ENCODE measurements at regions of chr4 and their contacts with region 1.

Region 1: GRCh38 chr4:173334085-173334772 is at the start of gene HMGB2:
- DNase-seq: peak; percentile 98
- ATAC-seq: peak; percentile 90
- H3K4me3 ChIP-seq: peak within 1 kb of the TSS; percentile 86 to 91
- H3K27ac ChIP-seq: peak within 1 kb of the TSS; percentile 97
- H3K4me1 ChIP-seq: peaks cover 11% of the 10 kb centered on the region; the same call in 1 of the 2 replicates
- H3K27me3 ChIP-seq: no peaks in the 10 kb centered on the region
- CTCF ChIP-seq: no peak
- total RNA-seq, gene HMGB2: 183 TPM

Region 2: GRCh38 chr4:173360587-173361221 is 26.5 kb after region 1 on chr4:
- CTCF ChIA-PET with region 1: no interaction called
- POLR2A ChIA-PET with region 1: interaction called, 12 read pairs
- in situ Hi-C with region 1: no loop called
- intact Hi-C with region 1: loop called (anchors 5 kb)
- DNase-seq: no peak
- ATAC-seq: peak; percentile 79
- H3K4me3 ChIP-seq: no peak overlapping the region
- H3K27ac ChIP-seq: no peak overlapping the region
- H3K4me1 ChIP-seq: no peaks in the 10 kb centered on the region
- H3K27me3 ChIP-seq: no peaks in the 10 kb centered on the region
- CTCF ChIP-seq: peak; percentile 52

Measured in Panc1 (cell line).